A673 (cell line): ENCODE measurements at regions of chr2 and their contacts with region 1.

Region 1: GRCh38 chr2:235021752-235022151 is 69.9 kb downstream of the SH3BP4 start:
- DNase-seq: peak; percentile 29
- H3K4me3 ChIP-seq: no peak overlapping the region
- H3K27ac ChIP-seq: no peak overlapping the region
- H3K4me1 ChIP-seq: peaks cover 3% of the 10 kb centered on the region
- H3K27me3 ChIP-seq: no peaks in the 10 kb centered on the region
- CTCF ChIP-seq: no peak

Region 2: GRCh38 chr2:234981197-234982117 is 40.3 kb before region 1 on chr2:
- CTCF ChIA-PET with region 1: no interaction called
- POLR2A ChIA-PET with region 1: no interaction called
- intact Hi-C with region 1: loop called (anchors 1 kb)
- DNase-seq: peak; percentile 68
- H3K4me3 ChIP-seq: no peak overlapping the region
- H3K27ac ChIP-seq: peak overlapping the region; percentile 24
- H3K4me1 ChIP-seq: peaks cover 23% of the 10 kb centered on the region
- H3K27me3 ChIP-seq: no peaks in the 10 kb centered on the region
- CTCF ChIP-seq: peak; percentile 17; the same call in 1 of the 2 replicates

Region 3: DNA sequence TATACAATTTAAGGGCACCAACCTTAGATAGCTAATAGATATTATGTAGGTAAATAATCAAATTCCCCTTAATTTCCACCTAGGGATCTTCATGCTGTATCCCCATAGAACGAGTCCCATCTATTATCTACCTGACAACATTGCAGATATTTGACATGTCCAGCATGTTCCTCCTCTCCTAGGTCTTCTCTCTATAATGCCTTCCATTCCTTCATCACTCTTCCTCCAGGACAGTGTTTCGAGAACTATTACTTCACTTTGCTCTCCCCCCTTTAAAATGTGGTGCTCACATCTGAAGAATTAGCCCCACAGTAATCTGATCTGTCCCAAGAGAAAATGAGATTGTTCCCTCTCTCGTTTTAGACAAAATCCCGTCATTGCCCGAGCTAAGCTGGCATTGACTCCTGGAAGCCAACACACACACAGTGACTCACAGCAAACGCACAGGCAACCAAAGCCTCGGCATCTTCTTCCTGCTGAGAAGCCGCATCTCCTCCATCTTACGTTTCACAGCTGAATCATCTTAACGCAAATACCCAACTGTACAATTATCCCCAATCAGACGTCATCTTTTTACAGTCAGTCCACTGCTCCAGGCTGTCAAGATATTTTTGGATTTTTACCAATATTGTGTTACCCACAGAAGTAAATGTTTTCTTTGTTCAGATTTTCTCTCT is 309.2 kb after region 1 on chr2:
- CTCF ChIA-PET with region 1: no interaction called
- POLR2A ChIA-PET with region 1: no interaction called
- intact Hi-C with region 1: no loop called
- DNase-seq: peak; percentile 82
- H3K4me3 ChIP-seq: no peak overlapping the region
- H3K27ac ChIP-seq: no peak overlapping the region
- H3K4me1 ChIP-seq: no peaks in the 10 kb centered on the region
- H3K27me3 ChIP-seq: no peaks in the 10 kb centered on the region
- CTCF ChIP-seq: no peak